ENCODE measurements at regions of chr12 and their contacts with region 1.

Region 1: GRCh38 chr12:117011988-117012805 is 87.0 kb downstream of the TESC start:
- DNase-seq: no peak
- ATAC-seq: peak; percentile 38

Region 2: GRCh38 chr12:116910645-116911451 is 101.3 kb before region 1 on chr12 and contains the start of gene FBXW8:
- intact Hi-C with region 1: loop called (anchors 10 kb)
- DNase-seq: peak; percentile 87
- ATAC-seq: peak; percentile 96
- total RNA-seq, gene FBXW8: 5.5 TPM

Region 3: DNA sequence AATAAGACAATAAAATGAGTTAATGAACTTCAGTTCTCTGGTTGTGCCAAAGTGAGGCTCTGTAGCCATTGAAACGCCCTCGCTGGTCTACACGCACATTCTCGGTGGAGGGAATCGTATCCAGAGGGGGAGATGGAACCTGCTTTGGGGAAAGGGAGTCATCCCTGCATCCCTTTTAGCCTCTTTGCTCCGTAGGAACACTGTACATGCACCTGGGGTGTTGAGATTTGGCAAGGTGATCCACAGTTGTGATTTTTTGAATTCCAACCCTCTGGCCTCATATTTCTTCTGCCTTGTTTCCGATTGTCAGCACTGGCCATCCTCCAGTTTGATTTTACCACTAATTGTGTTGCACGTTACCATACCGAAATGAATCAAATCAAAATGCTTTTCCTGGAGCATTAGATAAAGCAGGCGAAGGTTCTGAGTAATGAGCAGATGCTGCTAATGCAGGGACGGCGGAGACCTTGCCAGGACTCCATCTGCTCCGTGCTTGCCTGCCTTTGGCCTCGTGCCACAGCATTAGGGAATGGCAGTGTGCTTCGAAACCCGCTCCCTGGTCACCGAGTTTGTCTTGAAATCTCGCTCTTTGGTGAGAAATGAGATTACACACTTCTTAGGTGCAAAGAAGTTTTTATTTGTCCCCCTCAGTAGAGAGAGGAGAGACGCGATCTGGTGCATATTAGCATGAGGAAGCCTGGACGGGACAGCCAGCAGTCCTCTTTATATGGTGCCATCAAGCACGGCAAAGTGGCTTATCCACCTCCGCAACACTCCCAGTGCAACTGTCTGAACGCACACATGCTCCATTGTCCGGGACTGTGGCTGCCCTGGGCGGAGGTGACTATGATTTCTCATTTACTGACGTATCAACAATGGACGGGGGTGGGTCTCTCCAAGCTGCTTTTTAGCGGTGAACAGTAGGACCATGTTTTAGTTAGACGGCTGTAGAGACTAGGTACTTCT is 42.3 kb before region 1 on chr12:
- intact Hi-C with region 1: no loop called
- DNase-seq: peak; percentile 78
- ATAC-seq: peak; percentile 78